ENCODE measurements at regions of chr14 and their contacts with region 1.

Region 1: DNA sequence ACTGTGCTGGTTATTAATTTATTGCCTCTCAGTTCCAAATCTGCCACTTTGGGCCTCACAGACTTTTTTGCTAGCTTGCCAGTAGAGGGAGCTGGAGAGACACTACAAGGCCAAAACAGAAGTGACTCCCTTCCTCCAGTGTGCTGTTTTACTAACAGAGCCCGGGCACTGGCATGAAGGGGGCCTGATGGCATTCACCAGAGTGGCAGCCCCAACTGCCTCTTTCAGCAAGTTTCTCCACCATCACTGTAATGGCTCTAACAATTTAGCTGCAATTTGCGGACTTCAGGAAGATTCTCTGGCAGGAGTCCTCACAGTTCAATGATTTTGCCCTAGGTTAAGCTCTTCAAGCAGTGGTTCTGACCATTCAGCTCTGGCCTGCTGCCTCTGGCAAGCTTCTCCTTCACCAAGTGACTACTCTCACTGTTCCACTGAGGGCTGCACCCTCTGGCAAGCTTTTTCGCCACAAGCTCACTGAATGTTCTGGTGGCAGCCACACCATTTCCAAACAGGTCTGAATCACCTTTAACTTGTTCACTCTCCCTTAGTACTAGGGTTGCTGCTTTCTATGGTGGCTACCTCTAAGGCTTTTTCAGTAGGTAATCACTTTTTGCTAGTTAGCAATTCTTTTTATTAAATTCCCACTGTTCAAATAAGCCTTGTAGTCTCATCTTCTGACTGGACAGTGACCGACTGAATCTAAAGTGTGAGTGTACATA is 104.9 kb downstream of the ZC3H14 start:
- DNase-seq: peak in 1 of 2 donors; percentile 80
- ATAC-seq: peak; percentile 59 to 74 (median 69)
- H3K4me3 ChIP-seq: no peak overlapping the region
- H3K4me3 Mint-ChIP-seq: no peak overlapping the region
- H3K27ac ChIP-seq: no peak overlapping the region
- H3K27ac Mint-ChIP-seq: no peak overlapping the region
- H3K4me1 ChIP-seq: peaks cover 3% of the 10 kb centered on the region
- H3K4me1 Mint-ChIP-seq: no peaks in the 10 kb centered on the region
- H3K27me3 ChIP-seq: no peaks in the 10 kb centered on the region
- H3K27me3 Mint-ChIP-seq: peaks cover 0 to 7% of the 10 kb centered on the region in 2 donors
- CTCF ChIP-seq: peak; percentile 77

Region 2: GRCh38 chr14:88868558-88869159 is 200.9 kb after region 1 on chr14:
- intact Hi-C with region 1: loop called (anchors 5 kb)
- DNase-seq: peak in 1 of 2 donors; percentile 38
- ATAC-seq: no peak
- H3K4me3 ChIP-seq: no peak overlapping the region
- H3K4me3 Mint-ChIP-seq: no peak overlapping the region
- H3K27ac ChIP-seq: no peak overlapping the region
- H3K27ac Mint-ChIP-seq: no peak overlapping the region
- H3K4me1 ChIP-seq: no peaks in the 10 kb centered on the region
- H3K4me1 Mint-ChIP-seq: no peaks in the 10 kb centered on the region
- H3K27me3 ChIP-seq: no peaks in the 10 kb centered on the region
- H3K27me3 Mint-ChIP-seq: peaks cover 0 to 4% of the 10 kb centered on the region in 2 donors
- CTCF ChIP-seq: no peak